ENCODE measurements at regions of chr12 and their contacts with region 1.

Region 1: GRCh38 chr12:76559400-76560085 is at the start of gene OSBPL8:
- DNase-seq: peak; percentile 93
- CTCF ChIP-seq: peak; percentile 45

Region 2: DNA sequence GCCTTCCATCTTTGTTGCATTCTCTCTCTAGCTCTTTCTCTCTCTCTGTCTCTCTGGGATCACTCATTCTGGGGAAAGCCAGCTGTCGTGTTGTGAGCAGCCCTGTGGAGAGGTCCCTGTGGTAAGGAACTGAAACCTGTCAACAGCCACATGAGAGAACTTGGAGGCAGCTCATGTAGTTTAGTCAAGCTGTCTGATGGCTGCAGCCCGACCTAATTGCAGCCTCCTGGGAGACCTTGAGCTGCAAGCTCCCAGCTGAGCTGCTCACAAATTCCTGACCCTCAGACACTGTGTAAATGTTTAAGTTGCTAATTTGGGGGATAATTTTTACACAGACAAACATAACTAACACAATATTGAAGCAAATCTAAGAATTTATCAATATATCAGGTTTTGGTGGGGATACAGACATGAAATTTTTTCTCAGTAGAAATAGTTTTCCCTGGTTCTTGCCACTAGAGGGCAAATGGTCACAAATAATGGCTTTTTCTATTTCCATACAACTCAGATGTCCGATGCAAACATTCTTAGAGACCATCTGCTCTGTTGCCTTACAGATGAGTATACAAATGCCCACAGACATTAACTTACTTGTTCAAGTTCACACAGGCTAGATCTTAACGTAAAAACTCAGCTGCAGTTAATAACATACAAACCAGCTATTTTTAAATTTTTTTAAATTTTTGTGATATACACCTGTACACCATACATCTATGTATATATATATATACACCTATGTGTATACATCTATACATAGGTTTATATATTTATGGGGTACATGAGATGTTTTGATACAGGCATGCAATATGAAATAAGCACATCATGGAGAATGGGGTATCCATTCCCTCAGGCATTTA is 1032.7 kb before region 1 on chr12:
- in situ Hi-C with region 1: loop called (anchors 25 kb)
- DNase-seq: peak; percentile 47
- CTCF ChIP-seq: peak; percentile 64

Measured in GM13977 (cell line).